Heart left ventricle (tissue), 16 donors: ENCODE measurements at regions of chr2 and their contacts with region 1.

Region 1: DNA sequence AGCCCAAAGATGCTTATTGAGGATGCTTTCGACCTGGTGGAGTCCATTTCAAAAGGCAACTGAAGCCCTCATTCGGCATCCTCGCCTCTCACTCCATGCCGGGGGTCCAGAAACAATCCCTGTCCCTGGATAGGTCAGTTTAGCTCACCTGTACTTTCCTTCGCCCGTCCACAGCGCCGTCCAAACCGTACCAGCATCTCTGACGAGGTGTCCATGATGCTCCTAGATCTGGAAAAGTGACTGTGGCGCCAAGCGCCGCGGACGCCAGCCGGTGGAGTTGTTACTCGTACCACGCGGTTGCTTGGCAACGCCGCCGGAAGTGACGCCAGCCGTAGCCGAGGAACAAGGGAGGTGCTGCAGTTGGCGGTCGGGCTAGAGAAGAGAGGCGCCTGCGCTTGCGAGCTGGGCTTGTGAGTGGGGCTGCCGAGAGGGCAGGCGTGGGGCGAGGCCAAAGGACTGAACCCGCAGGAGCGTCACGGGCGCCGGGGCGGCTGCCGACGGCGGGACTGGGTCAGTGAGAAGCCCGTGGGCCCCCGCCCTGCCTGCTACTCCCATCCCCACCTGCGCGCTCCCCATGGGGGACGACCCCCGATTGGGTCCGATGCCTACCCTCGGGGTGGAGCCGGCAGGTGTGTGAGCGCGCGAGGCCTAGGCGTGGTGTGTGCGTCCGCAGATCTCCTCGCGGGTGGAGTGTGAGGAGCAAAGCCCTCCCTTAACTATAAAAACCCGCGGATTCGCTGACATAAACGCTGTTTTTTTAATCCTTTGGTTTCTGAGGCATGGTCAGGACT is at the starts of genes CFAP210 and PHOSPHO2:
- DNase-seq: peak; percentile 98 to 100 (median 99)
- ATAC-seq: peak; percentile 99 to 100 (median 100)
- H3K4me3 ChIP-seq: peak within 1 kb of the TSS; percentile 57 to 96 (median 76)
- H3K27ac ChIP-seq: peak within 1 kb of the TSS in 11 of 12 donors; percentile 67 to 93 (median 83)
- H3K4me1 ChIP-seq: peaks cover 0 to 16% (median 5%) of the 10 kb centered on the region in 12 donors
- H3K27me3 ChIP-seq: no peaks in the 10 kb centered on the region
- CTCF ChIP-seq: no peak
- POLR2A ChIP-seq: peak in 1 of 2 donors; percentile 87
- total RNA-seq, gene CFAP210: not detected
- total RNA-seq, gene PHOSPHO2: 1.5 to 5.4 (median 3.0) TPM

Region 2: GRCh38 chr2:167832868-167833287 is 1861.4 kb before region 1 on chr2:
- intact Hi-C with region 1: no loop called
- DNase-seq: no peak
- ATAC-seq: no peak
- H3K4me3 ChIP-seq: no peak overlapping the region
- H3K27ac ChIP-seq: no peak overlapping the region
- H3K4me1 ChIP-seq: no peaks in the 10 kb centered on the region
- H3K27me3 ChIP-seq: peaks cover 0 to 3% (median 0%) of the 10 kb centered on the region in 9 donors
- CTCF ChIP-seq: no peak
- POLR2A ChIP-seq: no peak

Region 3: DNA sequence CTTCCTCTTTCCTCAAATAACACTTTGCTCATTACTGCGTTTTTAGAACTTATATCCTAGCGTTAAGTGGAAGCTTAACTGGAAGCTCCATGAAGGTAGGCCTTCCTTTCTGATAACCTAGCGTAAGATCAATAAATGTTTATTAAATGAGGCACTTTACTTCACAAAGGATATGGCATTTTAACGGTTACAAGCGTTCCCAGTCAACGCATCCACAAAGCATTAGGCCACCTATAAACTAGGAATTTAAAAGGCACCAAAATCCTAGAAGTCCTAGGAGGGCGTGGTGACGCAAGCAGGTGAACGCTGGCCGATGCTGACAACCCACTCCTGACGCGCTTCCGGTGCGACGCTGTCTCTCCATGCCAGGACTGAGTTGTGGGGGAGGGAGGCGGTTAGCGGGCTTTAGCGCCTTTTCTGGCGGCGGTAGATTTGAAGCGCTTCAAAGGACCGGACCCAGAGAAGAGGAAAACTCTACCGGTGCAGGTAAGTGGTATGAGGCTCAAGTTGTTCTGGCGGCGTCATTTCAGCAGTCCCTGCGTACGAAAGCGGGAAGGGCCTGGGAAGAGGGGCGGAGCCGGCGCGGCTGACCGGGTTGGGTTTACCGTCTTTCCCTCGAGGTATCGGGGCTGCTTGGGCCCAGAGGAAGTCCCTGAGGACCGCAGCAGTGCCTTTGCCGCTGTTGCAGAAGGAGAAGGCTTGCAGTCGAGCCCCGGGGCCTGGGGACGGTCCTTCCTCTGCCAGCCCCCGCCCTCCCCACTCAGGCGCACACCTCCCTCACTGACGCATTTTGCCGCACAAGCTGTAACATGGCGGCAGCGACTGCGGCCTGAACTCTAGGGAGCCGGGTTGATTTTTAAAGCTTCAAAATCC is 110.1 kb before region 1 on chr2 and contains the start of gene PPIG:
- intact Hi-C with region 1: loop called in 2 of 10 experiments (anchors 10 kb)
- DNase-seq: peak; percentile 90 to 94 (median 91)
- ATAC-seq: peak; percentile 96 to 98 (median 98)
- H3K4me3 ChIP-seq: peak within 1 kb of the TSS; percentile 72 to 98 (median 83)
- H3K27ac ChIP-seq: peak within 1 kb of the TSS; percentile 94 to 99 (median 97)
- H3K4me1 ChIP-seq: peaks cover 9 to 32% (median 24%) of the 10 kb centered on the region in 12 donors
- H3K27me3 ChIP-seq: no peaks in the 10 kb centered on the region
- CTCF ChIP-seq: no peak
- POLR2A ChIP-seq: no peak
- total RNA-seq, gene PPIG: 19.9 to 48.8 (median 39.9) TPM

Region 4: DNA sequence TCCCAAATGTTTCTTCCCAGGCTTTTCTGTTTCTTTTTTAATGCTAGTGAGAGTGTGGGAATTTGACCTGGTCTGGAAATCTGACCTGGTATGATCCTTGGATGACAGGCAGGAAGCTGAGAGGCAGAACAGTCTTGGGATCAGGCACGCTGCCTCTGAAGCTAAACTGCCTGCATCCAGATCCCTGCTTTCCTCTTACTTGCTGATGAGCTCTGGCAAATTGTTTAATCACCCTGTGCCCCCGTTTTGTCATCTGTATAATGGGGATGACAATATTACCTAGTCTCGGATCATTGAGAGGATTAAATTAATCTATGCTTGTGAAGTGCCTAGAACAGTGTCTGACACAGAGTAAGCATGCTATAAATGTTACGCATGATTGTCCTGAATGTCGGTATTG is 42.6 kb after region 1 on chr2:
- intact Hi-C with region 1: loop called in 1 of 10 experiments (anchors 5 kb)
- DNase-seq: peak in 2 of 5 donors; percentile 25 to 40
- ATAC-seq: peak in 1 of 4 donors; percentile 51
- H3K4me3 ChIP-seq: peak overlapping the region in 9 of 12 donors; percentile 16 to 76 (median 54)
- H3K27ac ChIP-seq: peak overlapping the region in 10 of 12 donors; percentile 26 to 66 (median 42)
- H3K4me1 ChIP-seq: peaks cover 0 to 15% (median 6%) of the 10 kb centered on the region in 12 donors
- H3K27me3 ChIP-seq: no peaks in the 10 kb centered on the region
- CTCF ChIP-seq: no peak
- POLR2A ChIP-seq: no peak

Region 5: DNA sequence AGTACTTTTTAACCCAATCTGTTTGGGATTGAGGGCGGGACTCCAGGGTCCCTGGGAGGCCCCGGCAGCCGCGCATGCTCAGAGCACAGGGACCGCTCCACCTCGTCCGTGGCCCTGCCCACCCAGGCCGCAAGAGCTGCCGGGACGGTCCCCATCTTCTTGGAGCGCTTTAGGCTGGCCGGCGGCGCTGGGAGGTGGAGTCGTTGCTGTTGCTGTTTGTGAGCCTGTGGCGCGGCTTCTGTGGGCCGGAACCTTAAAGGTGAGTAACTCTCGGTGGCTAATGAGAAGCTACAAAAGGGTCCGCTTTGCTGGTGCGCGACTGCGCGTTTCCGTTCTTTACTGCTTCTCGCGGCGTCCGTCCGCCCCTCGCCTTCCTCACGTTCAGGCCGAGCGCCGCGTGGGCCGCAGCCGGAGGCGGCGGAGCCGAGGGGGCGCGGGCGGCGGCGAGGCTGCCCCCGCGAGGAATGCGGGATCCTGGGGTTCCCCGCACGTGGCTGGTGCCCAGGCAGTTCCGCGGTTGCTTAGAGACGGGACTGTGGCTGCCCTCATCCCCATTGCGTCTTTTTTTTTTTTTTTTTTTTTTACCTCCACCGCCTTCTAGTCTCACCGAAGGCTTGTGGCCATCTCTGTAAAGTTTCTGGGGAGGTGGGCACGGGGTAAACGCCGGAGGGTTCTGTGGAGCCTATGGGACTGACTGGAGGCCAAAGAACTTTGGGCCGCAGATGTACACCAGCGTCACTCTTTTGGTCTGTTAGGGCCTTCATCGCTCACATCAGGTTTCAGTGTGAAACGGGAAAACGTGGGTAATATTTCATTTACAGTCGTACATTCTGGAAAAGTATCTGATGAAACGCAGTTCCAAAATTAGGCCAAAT is 104.6 kb after region 1 on chr2 and contains the start of gene SSB:
- intact Hi-C with region 1: loop called in 1 of 10 experiments (anchors 10 kb)
- DNase-seq: peak; percentile 93 to 97 (median 96)
- ATAC-seq: peak; percentile 100
- H3K4me3 ChIP-seq: peak within 1 kb of the TSS; percentile 65 to 98 (median 84)
- H3K27ac ChIP-seq: peak within 1 kb of the TSS; percentile 74 to 91 (median 79)
- H3K4me1 ChIP-seq: peaks cover 0 to 31% (median 7%) of the 10 kb centered on the region in 12 donors
- H3K27me3 ChIP-seq: no peaks in the 10 kb centered on the region
- CTCF ChIP-seq: peak in 1 of 12 donors; percentile 17
- POLR2A ChIP-seq: peak in 1 of 2 donors; percentile 76
- total RNA-seq, gene SSB: 37.4 to 60.6 (median 53.9) TPM

Region 6: DNA sequence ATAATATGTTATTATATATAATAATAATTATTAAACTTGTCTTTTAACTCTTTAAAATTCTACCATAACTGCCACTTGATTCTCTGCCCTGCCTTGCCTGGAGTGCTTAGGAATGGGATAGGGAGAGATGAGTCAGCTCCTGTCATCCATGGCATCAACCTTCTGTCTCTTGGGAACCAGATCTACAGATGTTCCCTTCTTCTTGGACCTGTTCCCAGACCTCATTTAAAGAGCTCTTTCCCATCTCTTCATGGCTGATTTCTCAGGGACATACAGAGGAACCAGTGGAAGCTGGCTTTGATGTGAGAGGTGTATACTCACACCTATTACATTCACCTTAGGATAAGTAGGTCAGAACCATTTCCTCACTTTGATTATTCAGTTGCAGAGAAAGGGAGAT is 328.4 kb after region 1 on chr2:
- intact Hi-C with region 1: no loop called
- DNase-seq: no peak
- ATAC-seq: peak in 1 of 4 donors; percentile 53
- H3K4me3 ChIP-seq: no peak overlapping the region
- H3K27ac ChIP-seq: no peak overlapping the region
- H3K4me1 ChIP-seq: peaks cover 0 to 17% (median 11%) of the 10 kb centered on the region in 12 donors
- H3K27me3 ChIP-seq: no peaks in the 10 kb centered on the region
- CTCF ChIP-seq: no peak
- POLR2A ChIP-seq: no peak